ENCODE measurements at regions of chr11 and their contacts with region 1.

Region 1: DNA sequence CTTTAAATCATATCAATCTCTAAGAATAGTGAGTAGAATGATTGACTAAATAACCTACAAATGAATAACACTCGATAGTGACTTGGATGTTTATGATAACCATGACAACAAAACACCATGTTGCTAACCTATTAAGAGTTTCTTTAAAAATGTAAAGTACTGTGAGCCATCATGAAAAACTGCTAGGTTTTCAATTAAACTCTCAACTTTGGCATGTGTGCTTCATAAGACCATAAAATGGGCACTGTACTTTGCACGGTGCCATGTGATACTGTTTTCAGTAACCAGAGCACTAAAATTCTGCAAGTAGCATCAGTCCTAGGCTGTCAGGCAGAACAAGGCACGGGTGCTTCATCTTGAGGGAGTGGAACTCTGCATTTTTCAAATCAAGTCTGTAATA is 96.2 kb upstream of the TRIM77 start:
- DNase-seq: no peak
- H3K4me3 ChIP-seq: no peak overlapping the region
- H3K27ac ChIP-seq: no peak overlapping the region
- H3K4me1 ChIP-seq: no peaks in the 10 kb centered on the region
- H3K27me3 ChIP-seq: no peaks in the 10 kb centered on the region
- CTCF ChIP-seq: no peak

Region 2: DNA sequence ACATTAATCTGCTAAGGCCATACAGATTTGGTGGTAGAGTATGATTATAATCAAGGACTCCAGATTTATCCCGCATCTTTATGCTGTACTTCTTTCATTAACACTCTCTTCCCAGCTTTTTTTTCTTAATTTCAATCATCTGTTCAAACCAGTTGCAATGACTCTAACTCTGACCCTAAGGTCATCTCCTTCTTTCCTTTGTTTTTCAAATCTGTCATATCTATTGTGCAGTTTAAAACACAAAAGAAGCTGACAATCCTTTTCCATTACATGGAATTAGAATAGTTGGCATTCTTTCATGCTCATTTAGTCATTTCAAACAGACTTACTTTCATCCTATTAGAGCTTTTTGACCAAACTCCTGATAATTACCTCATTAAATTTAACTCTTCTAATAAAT is 494.5 kb before region 1 on chr11:
- CTCF ChIA-PET with region 1: no interaction called
- dilution Hi-C with region 1: no loop called
- in situ Hi-C with region 1: loop called in 1 of 2 experiments (anchors 25 kb)
- intact Hi-C with region 1: no loop called
- DNase-seq: no peak
- H3K4me3 ChIP-seq: no peak overlapping the region
- H3K27ac ChIP-seq: no peak overlapping the region
- H3K4me1 ChIP-seq: no peaks in the 10 kb centered on the region
- H3K27me3 ChIP-seq: no peaks in the 10 kb centered on the region
- CTCF ChIP-seq: no peak

Region 3: GRCh38 chr11:89205378-89205777 is 408.5 kb before region 1 on chr11:
- CTCF ChIA-PET with region 1: no interaction called
- dilution Hi-C with region 1: no loop called
- in situ Hi-C with region 1: no loop called
- intact Hi-C with region 1: loop called (anchors 5 kb)
- DNase-seq: no peak
- H3K4me3 ChIP-seq: no peak overlapping the region
- H3K27ac ChIP-seq: no peak overlapping the region
- H3K4me1 ChIP-seq: no peaks in the 10 kb centered on the region
- H3K27me3 ChIP-seq: no peaks in the 10 kb centered on the region
- CTCF ChIP-seq: peak in 1 of 2 donors; percentile 20

Region 4: GRCh38 chr11:89529626-89530380 is 84.1 kb before region 1 on chr11:
- CTCF ChIA-PET with region 1: no interaction called
- dilution Hi-C with region 1: no loop called
- in situ Hi-C with region 1: no loop called
- intact Hi-C with region 1: no loop called
- DNase-seq: no peak
- H3K4me3 ChIP-seq: no peak overlapping the region
- H3K27ac ChIP-seq: no peak overlapping the region
- H3K4me1 ChIP-seq: no peaks in the 10 kb centered on the region
- H3K27me3 ChIP-seq: no peaks in the 10 kb centered on the region
- CTCF ChIP-seq: no peak

Region 5: GRCh38 chr11:89566972-89567371 is 46.9 kb before region 1 on chr11:
- CTCF ChIA-PET with region 1: no interaction called
- dilution Hi-C with region 1: no loop called
- in situ Hi-C with region 1: no loop called
- intact Hi-C with region 1: no loop called
- DNase-seq: no peak
- H3K4me3 ChIP-seq: no peak overlapping the region
- H3K27ac ChIP-seq: no peak overlapping the region
- H3K4me1 ChIP-seq: no peaks in the 10 kb centered on the region
- H3K27me3 ChIP-seq: peaks cover 2% of the 10 kb centered on the region
- CTCF ChIP-seq: no peak

Measured in mammary epithelial cell (primary cell).